ENCODE measurements at regions of chr11 and their contacts with region 1.

Region 1: GRCh38 chr11:512761-513595 is 5.9 kb upstream of the RNH1 start:
- DNase-seq: no peak
- H3K4me3 ChIP-seq: no peak overlapping the region
- H3K27ac ChIP-seq: no peak overlapping the region
- H3K4me1 ChIP-seq: peaks cover 3% of the 10 kb centered on the region
- H3K27me3 ChIP-seq: no peaks in the 10 kb centered on the region
- CTCF ChIP-seq: no peak
- EP300 ChIP-seq: no peak
- POLR2A ChIP-seq: no peak

Region 2: GRCh38 chr11:299951-300735 is 212.8 kb before region 1 on chr11:
- intact Hi-C with region 1: loop called in 1 of 4 experiments (anchors 5 kb)
- DNase-seq: peak in 2 of 5 donors; percentile 22 to 43
- H3K4me3 ChIP-seq: no peak overlapping the region
- H3K27ac ChIP-seq: no peak overlapping the region
- H3K4me1 ChIP-seq: no peaks in the 10 kb centered on the region
- H3K27me3 ChIP-seq: no peaks in the 10 kb centered on the region
- CTCF ChIP-seq: no peak
- EP300 ChIP-seq: no peak
- POLR2A ChIP-seq: no peak

Region 3: GRCh38 chr11:326842-327580 is 186.0 kb before region 1 on chr11:
- intact Hi-C with region 1: no loop called
- DNase-seq: peak; percentile 86 to 93 (median 90)
- H3K4me3 ChIP-seq: no peak overlapping the region
- H3K27ac ChIP-seq: peak overlapping the region; percentile 84 to 94
- H3K4me1 ChIP-seq: peaks cover 26% of the 10 kb centered on the region
- H3K27me3 ChIP-seq: no peaks in the 10 kb centered on the region
- CTCF ChIP-seq: no peak
- EP300 ChIP-seq: no peak
- POLR2A ChIP-seq: peak; percentile 14

Region 4: DNA sequence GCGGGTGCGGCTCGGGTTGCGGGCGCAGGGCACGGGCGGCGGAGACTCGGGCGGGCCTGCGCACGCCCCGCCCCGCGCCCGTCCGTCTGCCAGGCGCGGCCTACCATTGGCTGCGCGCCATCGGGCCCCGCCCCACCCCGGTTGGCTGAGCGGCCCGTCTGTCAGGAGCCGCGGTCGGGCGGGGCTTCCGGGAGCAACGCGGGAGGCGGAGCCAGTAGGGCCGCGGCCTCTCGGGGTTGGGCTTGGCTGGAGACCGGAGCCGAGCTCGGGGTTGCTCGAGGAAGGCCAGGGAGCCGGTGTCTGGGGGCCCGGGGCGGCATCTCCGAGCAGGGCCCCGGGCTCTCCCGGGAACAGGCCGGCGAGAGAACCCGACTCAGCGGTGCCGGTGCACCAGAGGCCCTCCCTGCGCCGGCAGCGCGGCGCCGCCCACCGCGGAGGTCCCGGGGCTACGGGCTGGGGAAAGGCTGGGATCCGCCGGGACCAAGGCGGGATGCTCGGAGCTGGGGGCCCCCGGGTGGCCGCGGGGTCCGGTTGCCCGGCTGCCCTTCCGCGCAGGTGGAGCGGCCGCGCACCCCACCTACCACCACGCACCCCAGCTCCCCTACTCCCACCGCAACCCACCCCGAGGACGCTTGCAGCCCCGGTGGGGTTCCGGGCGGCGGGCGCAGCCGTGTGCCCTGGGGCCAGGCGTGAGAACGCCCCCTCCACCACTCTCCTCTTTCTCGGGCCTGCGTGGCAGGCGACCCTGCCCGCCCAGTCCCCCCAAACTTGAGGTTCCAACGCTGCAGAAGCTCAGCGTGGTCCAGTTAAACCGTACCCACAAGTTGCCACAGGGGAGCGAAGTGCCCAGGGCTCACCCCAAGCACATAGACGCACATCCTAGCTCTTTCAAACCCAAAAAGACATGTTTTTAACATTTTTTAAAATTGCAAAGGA is 22.8 kb after region 1 on chr11 and contains the start of gene HRAS:
- intact Hi-C with region 1: no loop called
- DNase-seq: peak; percentile 94 to 97 (median 96)
- H3K4me3 ChIP-seq: peak within 1 kb of the TSS; percentile 72
- H3K27ac ChIP-seq: peak within 1 kb of the TSS; percentile 28 to 72
- H3K4me1 ChIP-seq: peaks cover 11% of the 10 kb centered on the region
- H3K27me3 ChIP-seq: no peaks in the 10 kb centered on the region
- CTCF ChIP-seq: no peak
- EP300 ChIP-seq: no peak
- POLR2A ChIP-seq: no peak
- total RNA-seq, gene HRAS: 21.3 to 49.6 (median 36.3) TPM

Measured in ovary (tissue), 10 donors.